Breast epithelium (tissue), 4 donors: ENCODE measurements at regions of chr2 and their contacts with region 1.

Region 1: DNA sequence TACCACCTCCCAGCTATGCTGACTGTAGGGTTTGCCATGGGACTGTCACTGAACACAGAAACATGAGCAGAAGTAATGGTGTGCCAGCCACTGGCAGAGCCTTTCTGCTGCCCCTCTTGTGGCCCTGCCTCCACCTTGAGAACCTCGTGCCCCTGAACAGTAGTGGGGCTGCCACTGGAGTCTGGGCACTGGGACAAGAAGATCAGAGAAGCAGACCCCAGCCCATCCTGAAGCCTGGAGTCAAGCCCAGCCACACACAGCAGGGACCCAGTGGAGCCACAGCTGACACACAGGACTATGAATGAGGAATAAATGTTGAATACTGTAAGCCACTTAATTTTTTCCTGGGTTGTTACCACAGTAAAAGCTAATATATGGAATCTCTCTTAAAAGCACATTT is 159.6 kb downstream of the NCKAP5 start:
- DNase-seq: no peak
- H3K4me3 ChIP-seq: no peak overlapping the region
- H3K27ac ChIP-seq: no peak overlapping the region
- H3K4me1 ChIP-seq: no peaks in the 10 kb centered on the region
- H3K27me3 ChIP-seq: no peaks in the 10 kb centered on the region
- CTCF ChIP-seq: no peak
- POLR2A ChIP-seq: no peak

Region 2: GRCh38 chr2:133352719-133353118 is 56.0 kb before region 1 on chr2:
- intact Hi-C with region 1: loop called (anchors 2 kb)
- DNase-seq: peak in 1 of 2 donors; percentile 20
- H3K4me3 ChIP-seq: no peak overlapping the region
- H3K27ac ChIP-seq: no peak overlapping the region
- H3K4me1 ChIP-seq: no peaks in the 10 kb centered on the region
- H3K27me3 ChIP-seq: no peaks in the 10 kb centered on the region
- CTCF ChIP-seq: no peak
- POLR2A ChIP-seq: no peak